ENCODE measurements at regions of chr22 and their contacts with region 1.

Region 1: DNA sequence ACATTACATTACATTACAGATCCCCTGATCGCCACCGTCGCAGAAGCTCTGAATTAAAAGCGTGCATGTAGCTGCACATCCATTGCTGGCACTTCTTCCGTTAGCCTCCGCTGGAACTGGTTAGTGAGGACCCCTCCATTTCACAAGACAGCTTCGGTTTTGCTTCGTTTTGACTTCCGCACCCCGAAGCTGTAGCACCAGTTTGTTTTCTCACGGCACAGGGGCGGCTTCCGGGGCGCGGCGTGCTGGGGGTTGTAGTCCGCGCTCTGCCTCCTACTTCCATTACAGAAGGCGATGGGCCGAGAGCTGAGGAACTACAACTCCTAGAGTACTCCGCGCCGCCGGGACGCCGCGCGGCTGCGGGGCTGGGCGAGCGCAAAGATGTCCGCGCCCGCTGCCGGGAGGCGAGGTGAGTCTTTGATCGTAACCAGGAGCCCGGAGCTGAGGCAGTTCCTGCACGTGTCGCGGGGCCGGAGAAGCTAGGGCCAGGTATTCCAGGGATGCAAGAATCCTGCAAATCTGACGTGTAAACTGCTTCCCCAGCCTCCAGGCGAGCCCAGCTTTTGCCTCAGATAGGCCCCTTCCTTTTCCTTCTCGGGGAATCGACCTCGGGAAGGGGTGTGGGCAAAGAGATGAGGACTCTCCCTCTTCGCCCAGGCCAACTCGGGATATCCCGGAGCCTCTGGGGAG is at the start of gene PEX26:
- DNase-seq: peak; percentile 84
- ATAC-seq: peak; percentile 96
- H3K4me3 ChIP-seq: peak within 1 kb of the TSS; percentile 92
- H3K27ac ChIP-seq: peak within 1 kb of the TSS; percentile 94
- H3K4me1 ChIP-seq: no peaks in the 10 kb centered on the region
- H3K27me3 ChIP-seq: no peaks in the 10 kb centered on the region
- CTCF ChIP-seq: no peak
- EP300 ChIP-seq: no peak
- POLR2A ChIP-seq: peak; percentile 90
- RAD21 ChIP-seq: no peak
- polyA plus RNA-seq, gene PEX26: 0.79 to 1.1 TPM

Region 2: GRCh38 chr22:17562906-17563870 is 514.6 kb before region 1 on chr22 and contains the start of gene SLC25A18:
- CTCF ChIA-PET with region 1: interaction called, 14 read pairs
- POLR2A ChIA-PET with region 1: no interaction called
- RAD21 ChIA-PET with region 1: interaction called, 8 read pairs
- SMC1A ChIA-PET with region 1: interaction called, 3 read pairs
- in situ Hi-C with region 1: no loop called
- intact Hi-C with region 1: loop called (anchors 5 kb)
- DNase-seq: no peak
- ATAC-seq: no peak
- H3K4me3 ChIP-seq: no peak within 1 kb of the TSS
- H3K27ac ChIP-seq: no peak within 1 kb of the TSS
- H3K4me1 ChIP-seq: no peaks in the 10 kb centered on the region
- H3K27me3 ChIP-seq: no peaks in the 10 kb centered on the region; a peak in 1 of 4 replicates
- CTCF ChIP-seq: no peak
- EP300 ChIP-seq: no peak
- POLR2A ChIP-seq: no peak
- RAD21 ChIP-seq: no peak
- polyA plus RNA-seq, gene SLC25A18: 0.03 TPM in 1 of 2 experiments, not detected in the other

Region 3: GRCh38 chr22:17695986-17696385 is 381.8 kb before region 1 on chr22:
- CTCF ChIA-PET with region 1: no interaction called
- POLR2A ChIA-PET with region 1: no interaction called
- RAD21 ChIA-PET with region 1: no interaction called
- SMC1A ChIA-PET with region 1: no interaction called
- in situ Hi-C with region 1: no loop called
- intact Hi-C with region 1: no loop called
- DNase-seq: no peak
- ATAC-seq: no peak
- H3K4me3 ChIP-seq: no peak overlapping the region
- H3K27ac ChIP-seq: no peak overlapping the region
- H3K4me1 ChIP-seq: no peaks in the 10 kb centered on the region
- H3K27me3 ChIP-seq: no peaks in the 10 kb centered on the region
- CTCF ChIP-seq: no peak
- EP300 ChIP-seq: no peak
- POLR2A ChIP-seq: no peak
- RAD21 ChIP-seq: no peak

Region 4: GRCh38 chr22:17785185-17786184 is 292.3 kb before region 1 on chr22:
- CTCF ChIA-PET with region 1: interaction called, 11 read pairs
- POLR2A ChIA-PET with region 1: interaction called, 3 read pairs
- RAD21 ChIA-PET with region 1: interaction called, 9 read pairs
- SMC1A ChIA-PET with region 1: interaction called, 31 read pairs
- in situ Hi-C with region 1: no loop called
- intact Hi-C with region 1: no loop called
- DNase-seq: no peak
- ATAC-seq: peak; percentile 67
- H3K4me3 ChIP-seq: no peak overlapping the region
- H3K27ac ChIP-seq: no peak overlapping the region
- H3K4me1 ChIP-seq: peaks cover 26% of the 10 kb centered on the region
- H3K27me3 ChIP-seq: no peaks in the 10 kb centered on the region
- CTCF ChIP-seq: peak; percentile 74 to 84 (median 79); a peak in 5 of 6 replicates
- EP300 ChIP-seq: no peak
- POLR2A ChIP-seq: peak; percentile 59; the same call in 1 of the 2 replicates
- RAD21 ChIP-seq: peak; percentile 51

Region 5: GRCh38 chr22:17910561-17911311 is 167.0 kb before region 1 on chr22:
- CTCF ChIA-PET with region 1: interaction called, 10 read pairs
- POLR2A ChIA-PET with region 1: no interaction called
- RAD21 ChIA-PET with region 1: interaction called, 6 read pairs
- SMC1A ChIA-PET with region 1: interaction called, 13 read pairs
- in situ Hi-C with region 1: no loop called
- intact Hi-C with region 1: no loop called
- DNase-seq: no peak
- ATAC-seq: no peak; the same call in 2 of the 3 replicates
- H3K4me3 ChIP-seq: no peak overlapping the region
- H3K27ac ChIP-seq: no peak overlapping the region
- H3K4me1 ChIP-seq: peaks cover 12% of the 10 kb centered on the region; the same call in 1 of the 2 replicates
- H3K27me3 ChIP-seq: no peaks in the 10 kb centered on the region
- CTCF ChIP-seq: peak in 1 of 3 experiments; percentile 40; a peak in 2 of 6 replicates
- EP300 ChIP-seq: no peak
- POLR2A ChIP-seq: no peak
- RAD21 ChIP-seq: peak; percentile 54

Region 6: GRCh38 chr22:18024276-18024947 is 53.4 kb before region 1 on chr22 and contains the start of gene MICAL3:
- CTCF ChIA-PET with region 1: interaction called, 80 read pairs
- POLR2A ChIA-PET with region 1: interaction called, 3 read pairs
- RAD21 ChIA-PET with region 1: interaction called, 19 read pairs
- SMC1A ChIA-PET with region 1: interaction called, 98 read pairs
- in situ Hi-C with region 1: no loop called
- intact Hi-C with region 1: no loop called
- DNase-seq: no peak
- ATAC-seq: peak; percentile 96
- H3K4me3 ChIP-seq: peak within 1 kb of the TSS; percentile 79
- H3K27ac ChIP-seq: no peak within 1 kb of the TSS
- H3K4me1 ChIP-seq: peaks cover 7% of the 10 kb centered on the region
- H3K27me3 ChIP-seq: no peaks in the 10 kb centered on the region; a peak in 2 of 4 replicates
- CTCF ChIP-seq: peak; percentile 58 to 83 (median 76); a peak in 4 of 6 replicates
- EP300 ChIP-seq: no peak
- POLR2A ChIP-seq: no peak
- RAD21 ChIP-seq: peak; percentile 75
- polyA plus RNA-seq, gene MICAL3: 2.6 to 3.3 TPM

Region 7: GRCh38 chr22:18104566-18104965 is 26.8 kb after region 1 on chr22:
- CTCF ChIA-PET with region 1: interaction called, 17 read pairs
- POLR2A ChIA-PET with region 1: interaction called, 8 read pairs
- RAD21 ChIA-PET with region 1: interaction called, 21 read pairs
- SMC1A ChIA-PET with region 1: interaction called, 31 read pairs
- in situ Hi-C with region 1: no loop called
- intact Hi-C with region 1: loop called (anchors 1 kb)
- DNase-seq: no peak
- ATAC-seq: peak; percentile 44
- H3K4me3 ChIP-seq: 0 out of 2 replicates have a peak overlapping the region, but pooled peaks have one; percentile 18
- H3K27ac ChIP-seq: peak overlapping the region; percentile 96
- H3K4me1 ChIP-seq: peaks cover 35% of the 10 kb centered on the region
- H3K27me3 ChIP-seq: no peaks in the 10 kb centered on the region
- CTCF ChIP-seq: no peak
- EP300 ChIP-seq: no peak
- POLR2A ChIP-seq: no peak
- RAD21 ChIP-seq: no peak